ENCODE measurements at regions of chr2 and their contacts with region 1.

Region 1: DNA sequence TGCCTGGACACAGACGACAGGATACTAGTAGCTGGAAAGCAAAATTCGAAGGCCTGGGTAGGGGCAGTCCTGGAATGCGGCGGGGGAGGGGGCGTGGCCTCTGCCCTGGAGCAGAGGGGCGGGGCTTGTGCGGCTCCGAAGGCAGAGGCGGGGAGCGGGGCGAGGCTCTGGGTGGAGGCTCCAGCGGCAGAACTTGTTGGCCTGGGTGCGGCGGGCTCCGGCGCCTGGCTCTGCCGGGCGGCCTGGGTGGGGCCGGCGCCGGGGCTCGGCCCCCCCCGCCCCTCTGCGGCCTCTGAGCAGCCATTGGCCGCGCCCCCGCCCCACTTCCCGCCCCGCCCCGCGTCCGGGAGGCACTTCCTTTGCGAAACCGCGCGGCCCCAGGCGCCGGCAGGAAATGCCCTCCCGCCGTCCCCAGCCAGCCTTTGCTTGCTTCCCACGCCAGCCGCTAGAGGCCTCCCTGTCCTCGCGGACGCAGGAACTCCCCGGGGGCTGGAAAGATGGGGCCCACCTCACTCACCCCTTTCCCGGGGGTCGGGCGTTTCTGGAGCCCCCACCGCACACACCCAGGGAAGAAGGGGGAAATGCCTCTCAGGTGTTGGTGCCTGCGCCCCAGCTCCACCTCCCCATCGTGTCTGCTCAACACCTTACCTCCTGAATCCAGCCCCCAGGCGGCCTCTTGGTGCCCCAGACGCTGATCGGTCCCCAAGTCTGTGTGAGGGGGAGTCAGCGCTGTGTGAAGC is 6.7 kb downstream of the CTDSP1 start:
- DNase-seq: peak; percentile 98
- H3K4me3 ChIP-seq: peak overlapping the region; percentile 23 to 54 (median 50)
- H3K27ac ChIP-seq: peak overlapping the region; percentile 88 to 92 (median 90)
- H3K4me1 ChIP-seq: peaks cover 0 to 45% (median 38%) of the 10 kb centered on the region in 4 donors
- H3K27me3 ChIP-seq: no peaks in the 10 kb centered on the region
- CTCF ChIP-seq: peak; percentile 71 to 90 (median 82)
- EP300 ChIP-seq: no peak
- POLR2A ChIP-seq: no peak

Region 2: DNA sequence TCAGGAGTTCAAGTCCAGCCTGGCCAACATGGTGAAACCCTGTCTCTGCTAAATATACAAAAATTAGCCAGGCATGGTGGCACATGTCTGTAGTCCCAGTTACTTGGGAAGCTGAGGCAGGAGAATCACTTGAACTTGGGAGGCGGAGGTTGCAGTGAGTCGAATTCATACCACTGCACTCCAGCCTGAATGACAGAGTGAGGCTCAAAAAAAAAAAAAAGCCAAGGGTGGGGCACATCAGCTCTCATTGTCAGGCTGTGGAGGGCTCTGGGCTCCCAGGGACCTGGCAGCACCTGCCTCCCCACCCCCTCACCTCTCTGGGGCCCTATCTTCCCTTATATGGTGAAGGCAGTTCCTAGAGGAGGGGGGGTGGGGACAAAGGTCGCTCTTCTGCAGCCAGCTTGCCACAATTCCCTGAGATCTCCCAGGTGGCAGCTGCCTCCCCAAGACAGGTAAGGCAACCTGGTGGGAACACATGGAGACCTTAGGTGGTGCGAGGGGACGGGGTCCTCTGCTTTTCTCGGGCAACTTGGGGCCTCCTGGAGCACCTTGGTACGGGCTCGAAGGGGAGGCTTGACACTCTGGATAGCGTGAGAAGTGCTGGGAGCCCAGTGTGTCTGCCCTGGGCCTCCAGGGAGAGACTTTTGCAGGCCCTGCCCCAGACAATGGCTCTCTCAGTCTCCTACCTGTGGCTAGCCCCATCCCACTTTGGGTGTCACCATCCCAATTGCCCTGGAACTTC is 12.5 kb after region 1 on chr2 and contains the start of gene VIL1:
- intact Hi-C with region 1: no loop called
- DNase-seq: no peak
- H3K4me3 ChIP-seq: no peak within 1 kb of the TSS
- H3K27ac ChIP-seq: no peak within 1 kb of the TSS
- H3K4me1 ChIP-seq: no peaks in the 10 kb centered on the region
- H3K27me3 ChIP-seq: no peaks in the 10 kb centered on the region
- CTCF ChIP-seq: no peak
- EP300 ChIP-seq: no peak
- POLR2A ChIP-seq: peak in 1 of 2 donors; percentile 72
- total RNA-seq, gene VIL1: 0.71 to 2.8 TPM in 2 of 4 donors, not detected in the others

Region 3: GRCh38 chr2:218466016-218466521 is 59.7 kb after region 1 on chr2:
- intact Hi-C with region 1: loop called (anchors 2 kb)
- DNase-seq: no peak
- H3K4me3 ChIP-seq: no peak overlapping the region
- H3K27ac ChIP-seq: no peak overlapping the region
- H3K4me1 ChIP-seq: no peaks in the 10 kb centered on the region
- H3K27me3 ChIP-seq: no peaks in the 10 kb centered on the region
- CTCF ChIP-seq: peak; percentile 32 to 55 (median 44)
- EP300 ChIP-seq: no peak
- POLR2A ChIP-seq: no peak

Region 4: GRCh38 chr2:218659258-218659987 is 253.0 kb after region 1 on chr2 and contains the starts of genes BCS1L and ZNF142:
- intact Hi-C with region 1: loop called (anchors 10 kb)
- DNase-seq: peak; percentile 95
- H3K4me3 ChIP-seq: peak within 1 kb of the TSS; percentile 78 to 92 (median 84)
- H3K27ac ChIP-seq: peak within 1 kb of the TSS; percentile 79 to 81 (median 80)
- H3K4me1 ChIP-seq: peaks cover 0 to 22% (median 20%) of the 10 kb centered on the region in 4 donors
- H3K27me3 ChIP-seq: no peaks in the 10 kb centered on the region
- CTCF ChIP-seq: no peak
- EP300 ChIP-seq: no peak
- POLR2A ChIP-seq: peak in 1 of 2 donors; percentile 55
- total RNA-seq, gene BCS1L: 20.7 to 42.5 (median 25.2) TPM
- total RNA-seq, gene ZNF142: 14.6 to 24.4 (median 19.5) TPM

Region 5: GRCh38 chr2:218710687-218711549 is 304.5 kb after region 1 on chr2 and contains the start of gene TTLL4:
- intact Hi-C with region 1: loop called (anchors 5 kb)
- DNase-seq: peak; percentile 99
- H3K4me3 ChIP-seq: peak within 1 kb of the TSS; percentile 67 to 93 (median 77)
- H3K27ac ChIP-seq: peak within 1 kb of the TSS; percentile 89 to 98 (median 92)
- H3K4me1 ChIP-seq: peaks cover 0 to 11% (median 10%) of the 10 kb centered on the region in 4 donors
- H3K27me3 ChIP-seq: no peaks in the 10 kb centered on the region
- CTCF ChIP-seq: peak; percentile 83 to 95 (median 90)
- EP300 ChIP-seq: no peak
- POLR2A ChIP-seq: peak; percentile 13 to 24
- total RNA-seq, gene TTLL4: 11.4 to 16.0 (median 12.5) TPM